Right ventricle myocardium inferior (tissue), 1 donor: ENCODE measurements at regions of chr14 and their contacts with region 1.

Region 1: DNA sequence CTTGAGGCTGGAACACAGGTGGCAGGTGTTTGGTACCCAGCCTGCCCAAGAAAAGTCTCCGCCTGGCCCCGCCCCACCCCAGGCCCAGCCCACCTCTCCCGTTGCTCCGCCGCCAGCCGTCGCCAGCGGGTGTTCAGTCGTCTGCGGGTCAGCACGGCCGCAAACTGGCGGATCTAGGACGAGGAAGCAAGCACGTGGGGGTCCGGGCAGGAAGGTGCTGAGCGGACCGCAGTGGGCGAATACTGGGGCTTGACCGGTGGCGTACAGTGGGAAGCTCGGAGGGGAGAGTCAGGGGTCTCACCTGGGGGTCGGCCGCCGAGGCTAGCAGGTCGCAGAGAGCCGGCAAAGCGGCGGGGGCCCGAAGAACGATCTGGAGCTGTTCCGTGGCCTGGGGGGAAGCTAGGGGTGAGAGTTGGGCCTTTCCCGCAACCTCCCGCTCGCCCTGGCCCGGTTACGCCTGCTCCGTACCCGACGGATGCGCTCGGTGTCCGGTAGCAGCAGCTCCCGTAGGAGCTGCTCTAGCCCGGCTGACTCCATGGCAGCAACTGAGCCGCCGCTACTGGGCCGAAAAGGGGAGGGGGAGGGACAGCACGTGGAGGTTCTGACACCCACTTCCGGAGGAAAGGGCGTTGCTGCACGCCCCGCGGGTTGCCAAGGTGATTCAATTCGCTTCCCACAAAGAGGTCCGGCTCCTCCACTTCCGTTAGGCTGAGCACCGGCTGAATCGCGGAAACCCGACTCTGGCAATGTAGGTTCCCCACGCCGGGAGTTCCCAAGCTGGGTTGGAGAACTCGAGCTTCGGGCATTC is at the start of gene IPO4:
- DNase-seq: peak; percentile 95
- ATAC-seq: peak; percentile 96
- total RNA-seq, gene IPO4: 10.5 TPM

Region 2: GRCh38 chr14:24146978-24147760 is 41.3 kb before region 1 on chr14 and contains the start of gene RNF31:
- intact Hi-C with region 1: loop called (anchors 5 kb)
- DNase-seq: peak; percentile 98
- ATAC-seq: peak; percentile 95
- total RNA-seq, gene RNF31: 33.4 TPM

Region 3: GRCh38 chr14:24299255-24300195 is 111.1 kb after region 1 on chr14 and contains the starts of genes DHRS1 and NOP9:
- intact Hi-C with region 1: loop called (anchors 5 kb)
- DNase-seq: peak; percentile 96
- ATAC-seq: peak; percentile 88
- total RNA-seq, gene DHRS1: 8.3 TPM
- total RNA-seq, gene NOP9: 23.0 TPM